Heart left ventricle (tissue), 16 donors: ENCODE measurements at regions of chr16 and their contacts with region 1.

Region 1: GRCh38 chr16:21060027-21060510 is 90.6 kb downstream of the DNAH3 start:
- DNase-seq: no peak
- ATAC-seq: peak in 1 of 4 donors; percentile 20
- H3K4me3 ChIP-seq: no peak overlapping the region
- H3K27ac ChIP-seq: no peak overlapping the region
- H3K4me1 ChIP-seq: no peaks in the 10 kb centered on the region
- H3K27me3 ChIP-seq: no peaks in the 10 kb centered on the region
- CTCF ChIP-seq: no peak
- POLR2A ChIP-seq: no peak

Region 2: DNA sequence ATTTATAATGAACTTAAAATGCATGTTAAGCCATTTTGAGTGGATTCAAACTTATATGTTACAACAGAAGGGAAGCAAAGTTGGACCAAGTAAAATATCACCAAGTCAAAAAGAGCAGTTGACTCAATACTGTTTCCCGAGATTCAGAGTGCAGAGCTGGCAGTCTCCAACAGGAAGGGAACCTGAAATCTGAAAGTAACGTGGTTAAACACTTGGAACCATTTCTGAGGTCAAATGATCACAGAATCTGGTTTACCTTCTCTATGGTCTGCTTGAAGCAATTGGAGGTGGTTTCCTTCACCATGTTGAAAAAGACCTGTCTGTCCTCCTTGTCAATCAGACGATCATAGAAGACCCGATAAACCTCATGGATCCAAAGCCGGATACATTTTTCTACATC is 73.0 kb before region 1 on chr16:
- intact Hi-C with region 1: loop called in 2 of 10 experiments (anchors 10 kb)
- DNase-seq: no peak
- ATAC-seq: no peak
- H3K4me3 ChIP-seq: no peak overlapping the region
- H3K27ac ChIP-seq: no peak overlapping the region
- H3K4me1 ChIP-seq: no peaks in the 10 kb centered on the region
- H3K27me3 ChIP-seq: no peaks in the 10 kb centered on the region
- CTCF ChIP-seq: no peak
- POLR2A ChIP-seq: no peak

Region 3: DNA sequence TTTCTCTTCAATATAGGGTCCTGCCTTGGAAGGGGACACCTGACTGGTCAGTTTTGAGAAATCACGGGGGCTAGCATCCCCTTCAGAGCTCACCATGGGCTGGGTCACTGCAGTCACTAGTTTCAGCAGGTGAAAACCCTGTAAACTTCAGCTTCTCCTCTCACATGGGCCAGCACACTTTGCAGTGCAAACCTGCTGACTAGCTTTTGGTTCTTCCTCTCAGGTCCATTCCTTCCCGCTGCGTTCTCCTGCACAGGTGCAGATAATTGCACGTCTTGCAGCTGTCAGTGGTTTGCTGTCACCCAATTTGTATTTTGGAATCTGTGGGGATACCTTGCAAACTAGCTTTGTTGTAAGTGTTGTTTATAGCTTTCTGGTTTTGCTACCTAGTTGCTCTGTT is 64.4 kb before region 1 on chr16:
- intact Hi-C with region 1: loop called in 1 of 10 experiments (anchors 10 kb)
- DNase-seq: no peak
- ATAC-seq: no peak
- H3K4me3 ChIP-seq: no peak overlapping the region
- H3K27ac ChIP-seq: no peak overlapping the region
- H3K4me1 ChIP-seq: no peaks in the 10 kb centered on the region
- H3K27me3 ChIP-seq: no peaks in the 10 kb centered on the region
- CTCF ChIP-seq: no peak
- POLR2A ChIP-seq: no peak

Region 4: GRCh38 chr16:21009815-21010214 is 50.3 kb before region 1 on chr16:
- intact Hi-C with region 1: no loop called
- DNase-seq: no peak
- ATAC-seq: no peak
- H3K4me3 ChIP-seq: no peak overlapping the region
- H3K27ac ChIP-seq: no peak overlapping the region
- H3K4me1 ChIP-seq: no peaks in the 10 kb centered on the region
- H3K27me3 ChIP-seq: no peaks in the 10 kb centered on the region
- CTCF ChIP-seq: no peak
- POLR2A ChIP-seq: no peak

Region 5: GRCh38 chr16:21023509-21024202 is 36.4 kb before region 1 on chr16:
- intact Hi-C with region 1: no loop called
- DNase-seq: peak in 4 of 5 donors; percentile 26 to 64 (median 48)
- ATAC-seq: peak; percentile 58 to 96 (median 94)
- H3K4me3 ChIP-seq: no peak overlapping the region
- H3K27ac ChIP-seq: peak overlapping the region in 3 of 12 donors; percentile 8 to 49 (median 26)
- H3K4me1 ChIP-seq: peaks cover 0 to 10% (median 0%) of the 10 kb centered on the region in 12 donors
- H3K27me3 ChIP-seq: no peaks in the 10 kb centered on the region
- CTCF ChIP-seq: no peak
- POLR2A ChIP-seq: no peak